Posterior cingulate gyrus (tissue), 11 donors: ENCODE measurements at regions of chr14 and their contacts with region 1.

Region 1: GRCh38 chr14:26394150-26394810 is 203.6 kb downstream of the NOVA1 start:
- DNase-seq: no peak

Region 2: GRCh38 chr14:26598081-26598795 is 204.0 kb after region 1 on chr14:
- intact Hi-C with region 1: loop called (anchors 5 kb)
- DNase-seq: peak; percentile 81 to 98 (median 90)

Region 3: DNA sequence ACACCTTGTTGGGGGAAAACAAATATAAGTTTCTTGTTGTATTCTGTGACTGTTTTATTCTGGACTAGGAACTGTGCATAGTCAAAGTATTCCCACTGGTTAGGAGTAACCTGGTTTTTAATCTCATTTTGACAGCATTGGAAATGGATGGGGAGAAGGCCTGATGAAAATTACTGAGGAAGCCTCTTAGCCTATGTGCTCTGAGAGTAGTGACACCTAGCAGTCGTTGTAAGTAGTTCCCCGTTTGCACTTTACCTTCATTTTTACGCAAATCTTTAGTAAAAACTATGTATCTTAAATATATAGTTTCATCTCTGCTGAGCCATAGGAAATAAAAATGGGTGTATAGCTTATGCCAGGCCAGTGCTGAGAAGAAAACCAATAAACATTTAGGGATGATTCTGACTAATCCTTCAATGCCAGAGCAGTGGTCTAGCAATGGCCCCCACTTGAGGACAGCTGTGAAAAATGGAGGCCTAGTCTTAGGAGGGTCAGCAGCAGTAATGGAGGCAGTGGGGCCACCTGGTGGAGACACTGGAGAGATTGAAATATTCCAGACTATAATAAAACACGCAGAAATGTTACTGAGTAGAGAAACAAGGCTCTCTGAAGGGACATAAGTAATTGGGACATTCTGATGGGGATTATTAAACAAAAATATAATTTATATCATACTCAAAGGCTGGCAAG is 336.8 kb after region 1 on chr14:
- intact Hi-C with region 1: loop called (anchors 5 kb)
- DNase-seq: peak in 5 of 10 donors; percentile 9 to 71 (median 25)

Region 4: DNA sequence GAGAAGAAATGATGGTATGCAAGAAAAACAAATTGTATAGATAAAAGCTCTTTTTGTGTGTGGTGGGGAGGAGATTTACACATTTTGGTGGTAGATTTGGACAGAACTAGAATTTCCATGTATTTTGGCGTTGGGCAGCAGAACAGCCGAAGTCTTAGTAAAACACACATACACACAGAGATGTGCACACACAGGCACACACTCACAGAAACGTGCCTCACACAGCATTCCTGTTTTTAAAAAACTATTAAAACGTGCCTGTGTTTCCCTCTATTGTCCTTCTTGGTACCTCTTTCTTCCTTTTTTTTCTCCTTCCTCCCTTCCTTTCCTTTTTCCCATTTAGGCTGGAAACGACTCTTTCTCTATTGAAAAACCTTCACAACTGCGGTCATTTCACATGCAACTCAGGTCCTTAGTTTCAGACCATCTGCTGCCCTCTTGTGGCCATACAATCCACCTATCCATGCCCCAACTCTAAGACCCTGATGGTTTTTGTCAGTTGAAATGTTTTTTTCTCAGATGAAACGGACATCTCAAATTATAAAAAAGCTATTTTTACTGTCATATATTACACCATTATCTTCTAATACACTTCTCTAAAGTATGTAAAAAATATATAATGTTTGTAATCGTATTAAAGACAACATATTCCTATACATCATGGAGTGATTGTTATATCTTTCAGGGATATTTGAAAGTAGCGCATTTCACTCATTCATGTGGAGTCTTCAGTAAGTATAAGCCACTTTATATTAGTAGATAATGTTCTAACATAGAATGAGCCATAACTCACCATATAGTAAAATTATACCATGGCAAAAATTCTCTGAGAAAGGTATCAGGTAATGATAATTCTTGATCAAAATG is 590.3 kb after region 1 on chr14:
- intact Hi-C with region 1: loop called (anchors 2 kb)
- DNase-seq: peak in 6 of 10 donors; percentile 43 to 85 (median 64)

Region 5: DNA sequence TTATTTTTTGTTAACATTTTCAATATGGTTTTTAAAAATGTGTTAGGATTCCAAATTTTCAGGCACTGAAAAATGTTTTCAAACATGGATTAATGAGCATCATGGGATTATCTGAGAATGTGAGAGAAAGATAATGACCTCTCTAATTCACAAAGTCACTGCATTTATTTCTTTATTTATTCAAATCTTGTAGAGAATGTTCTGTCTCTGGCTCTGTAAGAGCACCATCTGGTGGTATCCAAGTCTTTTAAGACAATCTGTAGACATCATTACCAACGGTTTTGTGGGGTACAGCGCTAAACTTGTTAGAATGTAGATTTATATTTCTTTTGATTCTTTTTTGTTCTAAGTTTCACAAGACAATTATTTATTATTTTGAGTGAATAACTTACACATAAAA is 1159.5 kb after region 1 on chr14:
- intact Hi-C with region 1: loop called (anchors 10 kb)
- DNase-seq: no peak